ENCODE measurements at regions of chr15 and their contacts with region 1.

Region 1: GRCh38 chr15:89317186-89317720 is 17.4 kb downstream of the POLG start:
- DNase-seq: peak; percentile 20
- H3K4me3 Mint-ChIP-seq: no peak overlapping the region
- H3K27ac Mint-ChIP-seq: peak overlapping the region; percentile 78
- H3K4me1 Mint-ChIP-seq: peaks cover 24% of the 10 kb centered on the region
- H3K27me3 Mint-ChIP-seq: no peaks in the 10 kb centered on the region

Region 2: DNA sequence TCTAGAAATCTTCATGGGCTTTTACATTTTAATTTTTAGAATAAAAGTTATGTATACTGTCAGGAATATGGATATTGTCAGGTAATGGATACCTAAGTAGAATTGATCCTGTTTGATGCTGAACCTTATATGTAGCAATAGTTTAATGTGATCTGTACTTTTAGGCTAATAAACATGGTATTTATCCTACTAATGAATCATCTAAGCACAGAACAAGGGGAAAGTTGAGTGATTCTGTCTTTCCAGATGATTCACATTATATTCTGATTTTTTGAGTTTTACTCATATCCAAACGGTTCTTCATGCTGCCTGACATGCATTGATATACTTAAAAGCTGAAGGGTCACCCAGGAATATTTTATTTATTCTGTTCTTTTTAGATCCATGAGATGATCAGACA is 38.9 kb before region 1 on chr15:
- CTCF ChIA-PET with region 1: no interaction called
- POLR2A ChIA-PET with region 1: no interaction called
- intact Hi-C with region 1: no loop called
- DNase-seq: no peak
- H3K4me3 Mint-ChIP-seq: no peak overlapping the region
- H3K27ac Mint-ChIP-seq: no peak overlapping the region
- H3K4me1 Mint-ChIP-seq: peaks cover 4% of the 10 kb centered on the region
- H3K27me3 Mint-ChIP-seq: no peaks in the 10 kb centered on the region

Region 3: DNA sequence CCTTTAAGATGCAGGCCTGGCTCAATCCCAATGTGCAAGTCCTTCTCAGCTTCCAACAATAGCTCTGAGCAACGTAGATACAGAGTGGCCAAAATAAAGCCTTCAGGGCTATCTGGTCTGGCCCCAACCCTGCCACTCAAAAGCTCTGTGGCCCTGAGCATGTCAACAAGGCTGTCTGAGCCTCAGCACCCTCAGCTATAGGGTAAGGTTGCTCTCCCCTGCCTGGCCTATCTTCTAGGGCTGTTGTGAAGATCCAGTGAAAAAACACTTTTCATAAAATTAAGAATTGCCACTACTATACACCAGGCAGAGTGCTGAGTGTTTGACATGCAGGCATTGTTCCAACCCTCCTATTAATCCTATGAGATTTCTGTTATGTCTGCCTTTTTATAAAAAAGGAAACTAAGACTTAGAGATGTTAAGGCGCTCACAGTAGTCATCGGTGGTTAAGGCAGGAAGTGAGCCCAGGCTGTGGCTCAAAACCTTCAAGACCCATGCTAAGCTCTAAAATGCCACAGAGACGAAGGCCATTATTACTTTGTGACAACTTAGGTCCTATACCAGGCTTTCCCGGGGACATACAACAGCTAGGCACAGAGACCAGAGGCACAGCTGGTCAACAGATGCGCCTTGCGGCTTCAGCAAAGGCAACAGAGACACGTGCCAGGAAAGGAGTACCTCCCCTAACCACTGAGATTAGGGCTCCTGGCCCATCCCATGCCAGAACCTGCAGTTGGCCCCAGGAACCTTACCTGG is 12.3 kb after region 1 on chr15:
- CTCF ChIA-PET with region 1: interaction called, 10 read pairs
- POLR2A ChIA-PET with region 1: interaction called, 3 read pairs
- intact Hi-C with region 1: no loop called
- DNase-seq: peak; percentile 59
- H3K4me3 Mint-ChIP-seq: no peak overlapping the region
- H3K27ac Mint-ChIP-seq: peak overlapping the region; percentile 64
- H3K4me1 Mint-ChIP-seq: peaks cover 48% of the 10 kb centered on the region
- H3K27me3 Mint-ChIP-seq: no peaks in the 10 kb centered on the region